OCI-LY7 (cell line): ENCODE measurements at regions of chr2 and their contacts with region 1.

Region 1: DNA sequence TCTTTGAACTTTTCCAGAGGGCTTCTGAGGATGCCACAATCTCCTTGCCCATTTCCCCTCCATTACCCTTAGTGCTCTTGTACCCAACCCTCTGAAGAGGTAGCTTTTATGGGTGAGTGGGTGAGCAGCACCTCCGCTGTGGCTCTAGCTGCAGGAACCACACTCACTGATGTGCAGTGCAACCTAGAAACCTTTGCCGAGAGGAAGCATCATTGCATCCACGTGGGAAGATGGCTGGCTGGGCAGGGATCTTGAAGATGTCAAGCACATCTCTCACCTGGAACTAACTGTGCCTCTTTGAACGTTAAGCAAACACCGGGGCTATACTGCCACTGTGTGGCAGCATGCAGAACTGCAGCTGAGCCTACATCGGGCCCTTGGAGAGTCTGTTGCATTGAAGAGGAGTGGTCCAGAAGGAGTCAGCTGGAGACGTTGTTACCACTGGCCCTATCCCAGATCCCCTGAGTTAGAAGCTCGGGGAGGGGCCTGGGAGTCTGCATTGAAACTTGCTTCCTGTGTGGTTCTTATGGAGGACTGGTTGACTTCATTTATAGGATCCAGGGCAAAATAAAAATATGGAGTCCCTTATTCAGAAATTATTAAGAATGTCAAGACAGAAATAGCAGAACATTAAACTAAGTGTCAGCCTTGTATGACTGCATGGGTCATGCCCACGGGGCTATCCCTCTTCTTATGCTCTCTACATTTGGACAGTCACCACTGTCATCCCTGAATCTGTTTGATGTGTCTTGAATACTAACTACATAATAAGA is 28.7 kb downstream of the IGFBP5 start:
- DNase-seq: peak; percentile 74
- H3K4me3 ChIP-seq: no peak overlapping the region
- H3K27ac ChIP-seq: no peak overlapping the region
- H3K4me1 ChIP-seq: no peaks in the 10 kb centered on the region
- CTCF ChIP-seq: peak; percentile 95

Region 2: GRCh38 chr2:216222650-216223352 is 443.8 kb before region 1 on chr2:
- CTCF ChIA-PET with region 1: no interaction called
- POLR2A ChIA-PET with region 1: no interaction called
- intact Hi-C with region 1: loop called (anchors 10 kb)
- DNase-seq: peak; percentile 13
- H3K4me3 ChIP-seq: no peak overlapping the region
- H3K27ac ChIP-seq: no peak overlapping the region
- H3K4me1 ChIP-seq: peaks cover 7% of the 10 kb centered on the region
- CTCF ChIP-seq: peak; percentile 63

Region 3: GRCh38 chr2:216519154-216519762 is 147.4 kb before region 1 on chr2:
- CTCF ChIA-PET with region 1: interaction called, 6 read pairs
- POLR2A ChIA-PET with region 1: interaction called, 9 read pairs
- intact Hi-C with region 1: loop called (anchors 1 kb)
- DNase-seq: peak; percentile 68
- H3K4me3 ChIP-seq: no peak overlapping the region
- H3K27ac ChIP-seq: no peak overlapping the region
- H3K4me1 ChIP-seq: no peaks in the 10 kb centered on the region
- CTCF ChIP-seq: peak; percentile 84